PC-9 (cell line): ENCODE measurements at regions of chr1 and their contacts with region 1.

Region 1: DNA sequence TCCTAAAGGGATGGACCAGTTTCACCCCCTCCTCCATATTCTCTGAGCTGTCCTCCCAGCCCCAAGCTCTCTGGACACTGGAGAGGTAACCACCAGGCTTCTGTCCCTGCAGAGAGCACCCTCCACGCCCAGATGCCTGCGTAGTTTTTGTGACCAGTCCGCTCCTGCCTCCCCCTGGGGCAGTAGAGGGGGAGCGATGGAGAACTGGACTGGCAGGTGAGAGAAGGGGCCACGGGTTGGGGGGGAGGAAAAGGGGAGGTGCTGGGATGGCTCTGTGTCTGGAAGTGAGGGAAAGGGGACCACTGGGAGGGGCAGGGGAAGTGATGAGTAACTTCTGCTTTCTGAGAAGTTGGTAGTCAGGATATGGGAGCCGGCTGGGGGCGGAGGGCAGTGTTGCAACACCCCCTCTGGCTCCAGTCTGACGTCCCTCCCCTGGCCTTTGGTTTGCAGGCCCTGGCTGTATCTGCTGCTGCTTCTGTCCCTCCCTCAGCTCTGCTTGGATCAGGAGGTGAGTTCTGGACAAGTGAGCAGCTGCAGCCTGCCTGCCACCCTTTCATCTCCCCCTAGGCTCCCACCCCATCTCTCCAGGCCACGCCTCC is 3.0 kb downstream of the ADAMTSL4 start:
- DNase-seq: peak; percentile 89 to 91
- H3K4me3 ChIP-seq: no peak overlapping the region
- H3K27ac ChIP-seq: peak overlapping the region; percentile 65
- H3K4me1 ChIP-seq: peaks cover 46% of the 10 kb centered on the region
- H3K27me3 ChIP-seq: no peaks in the 10 kb centered on the region
- CTCF ChIP-seq: no peak

Region 2: GRCh38 chr1:150486964-150487762 is 65.0 kb before region 1 on chr1 and contains the start of gene TARS2:
- CTCF ChIA-PET with region 1: no interaction called
- POLR2A ChIA-PET with region 1: no interaction called
- intact Hi-C with region 1: loop called (anchors 5 kb)
- DNase-seq: peak; percentile 95 to 97
- H3K4me3 ChIP-seq: peak within 1 kb of the TSS; percentile 81
- H3K27ac ChIP-seq: peak within 1 kb of the TSS; percentile 18; the same call in 1 of the 2 replicates
- H3K4me1 ChIP-seq: peaks cover 8% of the 10 kb centered on the region; the same call in 1 of the 2 replicates
- H3K27me3 ChIP-seq: no peaks in the 10 kb centered on the region
- CTCF ChIP-seq: peak; percentile 61
- total RNA-seq, gene TARS2: 44.8 and 46.0 TPM in 2 replicates

Region 3: GRCh38 chr1:150507905-150508854 is 44.0 kb before region 1 on chr1 and contains the start of gene ECM1:
- CTCF ChIA-PET with region 1: no interaction called
- POLR2A ChIA-PET with region 1: no interaction called
- intact Hi-C with region 1: no loop called
- DNase-seq: peak; percentile 55 to 63
- H3K4me3 ChIP-seq: no peak within 1 kb of the TSS
- H3K27ac ChIP-seq: no peak within 1 kb of the TSS
- H3K4me1 ChIP-seq: peaks cover 13% of the 10 kb centered on the region
- H3K27me3 ChIP-seq: no peaks in the 10 kb centered on the region
- CTCF ChIP-seq: no peak
- total RNA-seq, gene ECM1: 6.3 and 10.3 TPM in 2 replicates

Region 4: GRCh38 chr1:150537732-150538684 is 14.2 kb before region 1 on chr1:
- CTCF ChIA-PET with region 1: interaction called, 11 read pairs
- POLR2A ChIA-PET with region 1: interaction called, 18 read pairs
- intact Hi-C with region 1: no loop called
- DNase-seq: peak; percentile 70 to 78
- H3K4me3 ChIP-seq: no peak overlapping the region
- H3K27ac ChIP-seq: peak overlapping the region; percentile 48
- H3K4me1 ChIP-seq: peaks cover 33% of the 10 kb centered on the region
- H3K27me3 ChIP-seq: no peaks in the 10 kb centered on the region
- CTCF ChIP-seq: no peak